Activated CD8-positive, alpha-beta T cell treated with anti-CD3 and anti-CD28 coated beads for 36 hours (primary cell): ENCODE measurements at regions of chr11 and their contacts with region 1.

Region 1: GRCh38 chr11:22829231-22830081 is at the start of gene SVIP:
- DNase-seq: peak; percentile 95
- ATAC-seq: peak; percentile 95
- H3K4me3 Mint-ChIP-seq: peak within 1 kb of the TSS; percentile 87
- H3K27ac Mint-ChIP-seq: peak within 1 kb of the TSS; percentile 92
- H3K4me1 Mint-ChIP-seq: peaks cover 15% of the 10 kb centered on the region
- H3K27me3 Mint-ChIP-seq: no peaks in the 10 kb centered on the region
- CTCF ChIP-seq: peak; percentile 29
- total RNA-seq, gene SVIP: 62.9 to 65.9 TPM

Region 2: GRCh38 chr11:22625448-22626287 is 203.8 kb before region 1 on chr11 and contains the start of gene FANCF:
- CTCF ChIA-PET with region 1: no interaction called
- POLR2A ChIA-PET with region 1: interaction called, 11 read pairs
- intact Hi-C with region 1: no loop called
- DNase-seq: peak; percentile 97
- ATAC-seq: peak; percentile 97
- H3K4me3 Mint-ChIP-seq: peak within 1 kb of the TSS; percentile 96
- H3K27ac Mint-ChIP-seq: peak within 1 kb of the TSS; percentile 98
- H3K4me1 Mint-ChIP-seq: peaks cover 31% of the 10 kb centered on the region
- H3K27me3 Mint-ChIP-seq: no peaks in the 10 kb centered on the region
- CTCF ChIP-seq: no peak
- total RNA-seq, gene FANCF: 13.4 to 14.9 TPM

Region 3: GRCh38 chr11:22898036-22898435 is 68.6 kb after region 1 on chr11:
- CTCF ChIA-PET with region 1: no interaction called
- POLR2A ChIA-PET with region 1: no interaction called
- intact Hi-C with region 1: no loop called
- DNase-seq: no peak
- ATAC-seq: no peak
- H3K4me3 Mint-ChIP-seq: no peak overlapping the region
- H3K27ac Mint-ChIP-seq: no peak overlapping the region
- H3K4me1 Mint-ChIP-seq: no peaks in the 10 kb centered on the region
- H3K27me3 Mint-ChIP-seq: no peaks in the 10 kb centered on the region
- CTCF ChIP-seq: no peak